ENCODE measurements at regions of chr20 and their contacts with region 1.

Region 1: GRCh38 chr20:51541189-51542032 is 1.1 kb downstream of the NFATC2 start:
- DNase-seq: peak; percentile 44 to 87 (median 78)
- ATAC-seq: peak; percentile 78 to 81
- H3K4me3 Mint-ChIP-seq: peak overlapping the region; percentile 94 to 100 (median 98)
- H3K27ac Mint-ChIP-seq: peak overlapping the region; percentile 85 to 99 (median 97)
- H3K4me1 Mint-ChIP-seq: peaks cover 36 to 63% (median 56%) of the 10 kb centered on the region in 4 donors
- H3K27me3 Mint-ChIP-seq: no peaks in the 10 kb centered on the region

Region 2: GRCh38 chr20:51500311-51500710 is 41.1 kb before region 1 on chr20:
- POLR2A ChIA-PET with region 1: interaction called, 15 read pairs
- DNase-seq: peak in 9 of 10 donors; percentile 25 to 74 (median 47)
- ATAC-seq: peak; percentile 78 to 85
- H3K4me3 Mint-ChIP-seq: peak overlapping the region in 8 of 10 donors; percentile 16 to 72 (median 50)
- H3K27ac Mint-ChIP-seq: peak overlapping the region; percentile 78 to 99 (median 95)
- H3K4me1 Mint-ChIP-seq: peaks cover 51 to 91% (median 86%) of the 10 kb centered on the region in 4 donors
- H3K27me3 Mint-ChIP-seq: no peaks in the 10 kb centered on the region

Region 3: GRCh38 chr20:51661609-51662178 is 120.3 kb after region 1 on chr20:
- POLR2A ChIA-PET with region 1: no interaction called
- DNase-seq: peak in 1 of 10 donors; percentile 9
- ATAC-seq: peak; percentile 54 to 81
- H3K4me3 Mint-ChIP-seq: no peak overlapping the region
- H3K27ac Mint-ChIP-seq: peak overlapping the region in 2 of 10 donors; percentile 16 to 60
- H3K4me1 Mint-ChIP-seq: peaks cover 2 to 23% (median 12%) of the 10 kb centered on the region in 4 donors
- H3K27me3 Mint-ChIP-seq: peaks cover 0 to 1% (median 0%) of the 10 kb centered on the region in 5 donors